AG04449 (cell line): ENCODE measurements at regions of chr17 and their contacts with region 1.

Region 1: GRCh38 chr17:46049656-46050055 is 50.6 kb downstream of the STH start:
- DNase-seq: no peak
- H3K4me3 ChIP-seq: no peak overlapping the region
- CTCF ChIP-seq: no peak

Region 2: DNA sequence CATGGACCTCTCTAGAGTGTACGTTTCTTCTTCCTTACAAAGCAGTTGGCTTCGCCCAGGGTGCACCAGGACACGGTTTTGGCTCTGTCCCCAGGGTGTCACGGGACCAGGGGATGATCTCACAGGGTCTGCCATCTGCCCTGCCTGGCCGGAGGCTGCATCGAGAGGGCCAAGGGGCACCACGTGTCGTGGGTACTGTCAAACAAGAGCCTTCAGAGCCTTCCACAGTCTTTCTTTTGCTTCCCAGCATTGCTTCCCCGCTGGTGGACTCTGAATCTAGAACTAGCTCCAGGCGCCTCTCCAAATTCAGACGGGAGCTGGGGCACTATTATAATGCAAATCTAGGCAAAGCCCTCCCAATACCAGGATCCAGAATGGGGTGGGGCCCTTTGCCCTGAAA is 107.4 kb before region 1 on chr17:
- CTCF ChIA-PET with region 1: no interaction called
- POLR2A ChIA-PET with region 1: no interaction called
- DNase-seq: no peak
- H3K4me3 ChIP-seq: no peak overlapping the region
- CTCF ChIP-seq: no peak

Region 3: GRCh38 chr17:46061435-46061834 is 11.8 kb after region 1 on chr17:
- CTCF ChIA-PET with region 1: interaction called, 131 read pairs
- POLR2A ChIA-PET with region 1: no interaction called
- DNase-seq: no peak
- H3K4me3 ChIP-seq: no peak overlapping the region
- CTCF ChIP-seq: no peak

Region 4: GRCh38 chr17:46212634-46213435 is 163.2 kb after region 1 on chr17:
- CTCF ChIA-PET with region 1: interaction called, 87 read pairs
- POLR2A ChIA-PET with region 1: no interaction called
- DNase-seq: peak; percentile 28
- H3K4me3 ChIP-seq: no peak overlapping the region
- CTCF ChIP-seq: peak; percentile 49